ENCODE measurements at regions of chr5 and their contacts with region 1.

Region 1: DNA sequence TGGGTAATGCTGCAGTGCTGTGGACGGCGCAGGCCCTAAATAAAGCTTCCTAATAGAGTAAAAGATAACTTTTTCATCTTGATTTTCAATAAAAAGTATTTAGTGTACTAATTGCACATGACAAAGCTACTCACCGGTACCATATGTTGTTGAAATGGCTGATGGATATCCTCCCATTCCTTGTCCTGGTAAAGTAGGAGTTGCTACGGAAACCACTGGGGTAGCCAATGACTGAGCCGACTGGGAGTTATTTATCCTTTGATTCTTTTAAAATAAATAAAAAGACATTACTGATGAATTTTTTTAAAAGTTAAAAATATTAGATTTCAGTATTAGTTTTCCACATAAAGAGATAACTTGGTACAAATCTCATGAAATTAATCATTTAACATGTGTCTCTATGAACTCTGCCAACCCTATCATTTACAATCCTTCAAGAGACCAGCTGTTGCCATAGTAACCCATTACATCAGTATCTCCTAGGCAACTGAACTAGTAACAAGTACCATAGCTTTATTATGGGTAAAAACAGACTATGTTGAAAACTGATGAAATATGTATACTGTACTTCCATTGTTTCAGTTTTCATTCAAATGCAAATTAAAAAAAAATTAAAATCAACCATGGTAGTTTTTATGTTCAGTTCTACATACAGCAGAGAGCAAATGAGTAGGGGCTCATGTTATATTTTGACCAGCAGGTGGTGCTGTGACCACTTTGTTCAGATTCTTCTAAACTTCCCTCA is 153.7 kb downstream of the MEF2C start:
- DNase-seq: no peak

Region 2: DNA sequence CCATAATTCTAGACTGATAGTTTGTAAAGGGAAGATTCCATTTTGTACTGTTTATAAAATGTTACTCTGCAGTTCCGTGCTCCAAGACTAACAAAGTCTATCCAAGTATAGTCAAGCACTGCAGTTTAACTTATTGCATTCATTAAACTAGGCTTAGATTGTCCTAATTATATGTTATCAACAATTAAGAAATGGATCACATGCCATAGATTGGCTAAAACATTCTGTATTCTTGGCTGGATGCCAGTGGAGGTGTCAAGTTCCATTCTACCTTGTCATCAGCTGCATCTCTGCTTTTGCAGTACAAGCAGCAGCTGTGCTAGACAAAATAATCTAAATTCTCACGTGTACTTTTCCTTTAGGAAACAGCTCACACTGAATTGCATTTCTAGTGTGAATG is 223.1 kb after region 1 on chr5:
- intact Hi-C with region 1: no loop called
- DNase-seq: no peak

Region 3: GRCh38 chr5:90264689-90265544 is 1535.7 kb after region 1 on chr5:
- intact Hi-C with region 1: loop called (anchors 5 to 10 kb)
- DNase-seq: peak; percentile 85